Activated CD8-positive, alpha-beta T cell treated with anti-CD3 and anti-CD28 coated beads for 36 hours (primary cell): ENCODE measurements at regions of chr7 and their contacts with region 1.

Region 1: GRCh38 chr7:130982160-130982638 is 248.2 kb upstream of the KLF14 start:
- DNase-seq: no peak
- ATAC-seq: peak; percentile 84
- H3K4me3 Mint-ChIP-seq: no peak overlapping the region
- H3K27ac Mint-ChIP-seq: no peak overlapping the region
- H3K4me1 Mint-ChIP-seq: peaks cover 53% of the 10 kb centered on the region
- H3K27me3 Mint-ChIP-seq: no peaks in the 10 kb centered on the region
- CTCF ChIP-seq: peak; percentile 71

Region 2: GRCh38 chr7:130961128-130961601 is 21.0 kb before region 1 on chr7:
- CTCF ChIA-PET with region 1: interaction called, 15 read pairs
- POLR2A ChIA-PET with region 1: interaction called, 166 read pairs
- intact Hi-C with region 1: no loop called
- DNase-seq: peak; percentile 91
- ATAC-seq: peak; percentile 89
- H3K4me3 Mint-ChIP-seq: no peak overlapping the region
- H3K27ac Mint-ChIP-seq: peak overlapping the region; percentile 99
- H3K4me1 Mint-ChIP-seq: peaks cover 34% of the 10 kb centered on the region
- H3K27me3 Mint-ChIP-seq: no peaks in the 10 kb centered on the region
- CTCF ChIP-seq: no peak

Region 3: DNA sequence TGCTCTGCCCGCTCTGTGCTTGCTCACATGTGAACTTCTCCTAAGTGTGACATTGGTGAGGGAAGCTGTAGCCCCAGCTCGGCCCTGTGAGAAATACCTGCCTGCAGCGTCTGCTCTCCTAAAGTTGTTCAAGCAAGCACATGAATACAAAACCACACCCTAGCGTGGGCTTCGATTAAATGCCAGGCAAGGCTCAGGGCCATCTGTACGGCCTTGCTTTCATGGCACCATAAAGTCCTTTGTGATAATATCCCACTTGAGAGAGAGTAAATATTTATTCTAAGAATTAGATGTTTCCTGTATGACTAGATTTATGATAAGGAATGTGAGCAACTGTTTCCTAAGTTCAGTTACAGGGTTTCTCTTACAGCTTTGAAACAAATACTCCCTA is 14.6 kb after region 1 on chr7:
- CTCF ChIA-PET with region 1: interaction called, 69 read pairs
- POLR2A ChIA-PET with region 1: interaction called, 3 read pairs
- intact Hi-C with region 1: no loop called
- DNase-seq: peak; percentile 69
- ATAC-seq: peak; percentile 82
- H3K4me3 Mint-ChIP-seq: peak overlapping the region; percentile 20
- H3K27ac Mint-ChIP-seq: peak overlapping the region; percentile 85
- H3K4me1 Mint-ChIP-seq: peaks cover 76% of the 10 kb centered on the region
- H3K27me3 Mint-ChIP-seq: no peaks in the 10 kb centered on the region
- CTCF ChIP-seq: no peak

Region 4: DNA sequence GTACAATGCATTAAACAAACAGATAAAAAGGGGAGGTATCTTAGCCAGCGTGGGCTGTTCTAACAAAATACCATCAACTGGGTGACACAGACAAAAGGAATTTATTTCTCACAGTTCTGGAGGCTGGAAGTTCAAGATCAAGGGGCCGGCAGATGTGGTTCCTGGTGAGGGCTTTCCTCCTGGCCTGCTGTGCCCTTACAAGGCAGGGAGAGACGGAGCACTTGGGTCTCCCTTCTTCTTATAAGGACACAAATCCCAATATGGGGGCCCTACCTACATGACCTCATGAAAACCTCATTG is 33.4 kb after region 1 on chr7:
- CTCF ChIA-PET with region 1: interaction called, 19 read pairs
- POLR2A ChIA-PET with region 1: interaction called, 3 read pairs
- intact Hi-C with region 1: no loop called
- DNase-seq: no peak
- ATAC-seq: no peak
- H3K4me3 Mint-ChIP-seq: no peak overlapping the region
- H3K27ac Mint-ChIP-seq: peak overlapping the region; percentile 73
- H3K4me1 Mint-ChIP-seq: peaks cover 87% of the 10 kb centered on the region
- H3K27me3 Mint-ChIP-seq: no peaks in the 10 kb centered on the region
- CTCF ChIP-seq: no peak

Region 5: GRCh38 chr7:131027287-131027773 is 45.1 kb after region 1 on chr7:
- CTCF ChIA-PET with region 1: interaction called, 20 read pairs
- POLR2A ChIA-PET with region 1: no interaction called
- intact Hi-C with region 1: no loop called
- DNase-seq: peak; percentile 65
- ATAC-seq: peak; percentile 15
- H3K4me3 Mint-ChIP-seq: no peak overlapping the region
- H3K27ac Mint-ChIP-seq: peak overlapping the region; percentile 99
- H3K4me1 Mint-ChIP-seq: peaks cover 82% of the 10 kb centered on the region
- H3K27me3 Mint-ChIP-seq: no peaks in the 10 kb centered on the region
- CTCF ChIP-seq: no peak

Region 6: DNA sequence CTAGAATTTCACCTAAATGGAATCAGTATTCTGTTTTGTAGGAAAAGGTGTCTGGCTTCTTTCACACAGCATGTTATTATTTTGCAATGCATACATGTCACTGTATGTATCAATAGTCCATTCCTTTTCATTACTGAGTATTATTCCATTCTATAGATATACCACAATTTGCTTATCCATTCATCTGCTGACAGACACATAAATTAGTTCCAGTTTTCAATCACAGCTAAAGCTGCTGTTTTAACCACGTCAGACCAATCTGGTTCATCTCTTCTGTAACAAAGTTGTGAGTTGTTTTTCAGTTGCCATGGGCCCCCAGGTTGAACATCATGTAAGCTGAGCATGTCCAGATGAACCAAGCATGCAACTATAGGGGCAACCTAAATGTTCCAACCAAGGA is 63.3 kb after region 1 on chr7:
- CTCF ChIA-PET with region 1: interaction called, 208 read pairs
- POLR2A ChIA-PET with region 1: interaction called, 3 read pairs
- intact Hi-C with region 1: loop called (anchors 2 kb)
- DNase-seq: no peak
- ATAC-seq: no peak
- H3K4me3 Mint-ChIP-seq: no peak overlapping the region
- H3K27ac Mint-ChIP-seq: peak overlapping the region; percentile 34
- H3K4me1 Mint-ChIP-seq: peaks cover 62% of the 10 kb centered on the region
- H3K27me3 Mint-ChIP-seq: no peaks in the 10 kb centered on the region
- CTCF ChIP-seq: no peak

Region 7: DNA sequence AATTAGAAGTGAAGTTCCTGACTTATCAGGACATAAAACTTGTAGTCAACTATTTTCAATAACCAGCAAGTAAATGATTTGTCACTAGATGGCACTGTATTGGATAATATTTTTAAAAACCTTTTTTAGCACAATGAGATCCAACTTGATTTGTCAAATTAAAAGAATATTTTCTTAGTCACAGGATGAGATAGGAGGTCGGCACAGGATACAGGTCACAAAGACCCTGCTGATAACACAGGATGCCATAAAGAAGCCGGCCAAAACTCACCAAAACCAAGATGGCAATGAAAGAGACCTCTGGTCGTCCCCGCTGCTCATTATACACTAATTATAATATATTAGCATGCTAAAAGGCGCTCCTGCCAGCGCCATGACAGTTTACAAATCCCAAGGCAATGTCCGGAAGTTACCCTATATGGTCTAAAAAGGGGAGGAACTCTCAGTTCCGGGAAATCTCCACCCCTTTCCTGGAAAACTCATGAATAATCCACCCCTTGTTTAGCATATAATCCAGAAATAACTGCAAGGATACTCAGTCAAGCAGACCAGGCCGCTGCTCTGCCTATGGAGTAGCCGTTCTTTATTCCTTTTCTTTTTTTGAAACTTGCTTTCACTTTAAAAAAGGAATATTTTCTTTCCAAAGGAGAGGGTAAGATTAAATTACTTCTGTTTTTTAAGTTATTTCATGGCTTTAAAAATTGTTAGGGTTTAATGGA is 89.7 kb after region 1 on chr7:
- CTCF ChIA-PET with region 1: interaction called, 12 read pairs
- POLR2A ChIA-PET with region 1: no interaction called
- intact Hi-C with region 1: no loop called
- DNase-seq: peak; percentile 37
- ATAC-seq: no peak
- H3K4me3 Mint-ChIP-seq: peak overlapping the region; percentile 24
- H3K27ac Mint-ChIP-seq: peak overlapping the region; percentile 83
- H3K4me1 Mint-ChIP-seq: peaks cover 84% of the 10 kb centered on the region
- H3K27me3 Mint-ChIP-seq: no peaks in the 10 kb centered on the region
- CTCF ChIP-seq: peak; percentile 55

Region 8: DNA sequence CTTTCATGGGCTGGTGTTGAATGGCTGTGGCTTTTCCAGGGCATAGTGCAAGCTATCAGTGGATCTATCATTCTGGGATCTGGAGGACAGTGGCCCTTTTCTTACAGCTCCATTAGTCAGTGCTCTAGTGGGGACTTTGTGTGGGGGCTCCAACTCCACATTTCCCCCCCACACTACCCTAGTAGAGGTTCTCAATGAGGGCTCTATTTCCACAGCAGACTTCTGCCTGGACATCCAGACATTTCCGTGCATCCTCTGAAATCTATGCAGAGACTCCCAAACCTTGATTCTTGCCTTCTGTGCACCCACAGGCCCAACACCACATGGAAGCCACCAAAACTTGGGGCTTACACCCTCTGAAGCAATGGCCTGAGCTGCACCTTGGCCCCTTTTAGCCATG is 137.2 kb after region 1 on chr7:
- CTCF ChIA-PET with region 1: no interaction called
- POLR2A ChIA-PET with region 1: no interaction called
- intact Hi-C with region 1: no loop called
- DNase-seq: no peak
- ATAC-seq: no peak
- H3K4me3 Mint-ChIP-seq: no peak overlapping the region
- H3K27ac Mint-ChIP-seq: no peak overlapping the region
- H3K4me1 Mint-ChIP-seq: no peaks in the 10 kb centered on the region
- H3K27me3 Mint-ChIP-seq: no peaks in the 10 kb centered on the region
- CTCF ChIP-seq: no peak

Region 9: DNA sequence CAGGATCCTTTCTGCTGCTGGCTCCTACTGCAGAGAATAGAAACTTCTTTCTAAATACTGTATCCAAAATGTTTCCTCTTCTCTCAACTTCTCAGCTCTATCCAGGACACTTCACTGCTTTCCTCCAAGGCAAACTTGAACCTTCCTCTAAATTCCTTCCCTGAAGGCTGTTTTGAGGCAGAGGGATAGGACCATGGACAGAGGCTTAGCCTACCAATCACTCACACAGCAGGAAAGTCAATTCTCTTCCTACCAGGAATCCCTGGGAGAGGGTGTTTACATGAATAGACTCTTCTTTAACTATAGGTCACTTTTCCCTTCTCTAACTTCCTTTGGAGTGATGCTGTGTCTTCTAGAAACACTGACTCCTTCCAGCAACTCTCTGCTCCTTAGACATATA is 229.9 kb after region 1 on chr7:
- CTCF ChIA-PET with region 1: no interaction called
- POLR2A ChIA-PET with region 1: no interaction called
- intact Hi-C with region 1: no loop called
- DNase-seq: no peak
- ATAC-seq: no peak
- H3K4me3 Mint-ChIP-seq: no peak overlapping the region
- H3K27ac Mint-ChIP-seq: no peak overlapping the region
- H3K4me1 Mint-ChIP-seq: no peaks in the 10 kb centered on the region
- H3K27me3 Mint-ChIP-seq: no peaks in the 10 kb centered on the region
- CTCF ChIP-seq: no peak